ENCODE measurements at regions of chr21 and their contacts with region 1.

Region 1: DNA sequence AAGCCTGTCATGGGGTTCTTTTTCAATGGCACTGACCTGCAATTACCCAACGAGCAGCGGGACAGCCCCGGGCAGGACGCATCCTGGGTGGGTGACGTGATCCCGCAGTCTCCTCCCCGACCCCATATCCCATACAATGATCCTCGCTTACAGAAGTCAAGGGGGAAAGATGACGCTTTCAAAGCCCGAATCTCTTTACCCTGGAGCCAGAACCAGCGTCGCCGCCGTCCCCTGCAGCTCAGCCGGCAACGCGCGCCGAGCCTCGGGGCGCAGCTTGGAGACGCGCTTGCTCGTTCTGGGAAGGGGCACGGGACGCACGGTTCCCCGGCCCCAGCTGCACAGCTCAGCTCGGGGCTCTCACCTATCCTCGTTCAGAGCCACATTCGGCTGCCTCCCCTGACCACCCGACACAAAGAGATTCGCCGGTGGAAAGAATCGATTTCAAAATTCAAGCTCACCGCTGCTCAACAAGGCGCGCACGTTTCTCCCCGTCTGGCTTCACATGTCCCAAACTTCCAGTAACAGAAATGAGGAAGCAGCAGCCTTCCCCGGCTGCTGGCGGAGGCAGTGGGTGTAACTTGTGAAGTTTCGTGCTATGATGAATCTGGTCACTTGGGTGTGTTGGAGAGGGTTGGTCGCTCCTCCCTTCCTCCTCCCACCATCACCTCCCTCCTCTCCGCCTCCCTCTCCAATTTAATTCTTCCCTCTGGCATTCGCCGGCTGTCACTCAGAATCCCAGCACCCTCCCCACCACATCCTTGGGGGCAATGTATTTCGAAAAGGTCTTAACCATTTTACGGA is at the start of gene TIAM1:
- ATAC-seq: peak; percentile 57 to 93 (median 74)
- H3K4me3 ChIP-seq: peak within 1 kb of the TSS; percentile 25 to 44 (median 28)
- H3K27ac ChIP-seq: no peak within 1 kb of the TSS
- H3K4me1 ChIP-seq: peaks cover 6 to 41% of the 10 kb centered on the region in 2 donors
- total RNA-seq, gene TIAM1: 1.6 to 70.7 (median 18.7) TPM

Region 2: DNA sequence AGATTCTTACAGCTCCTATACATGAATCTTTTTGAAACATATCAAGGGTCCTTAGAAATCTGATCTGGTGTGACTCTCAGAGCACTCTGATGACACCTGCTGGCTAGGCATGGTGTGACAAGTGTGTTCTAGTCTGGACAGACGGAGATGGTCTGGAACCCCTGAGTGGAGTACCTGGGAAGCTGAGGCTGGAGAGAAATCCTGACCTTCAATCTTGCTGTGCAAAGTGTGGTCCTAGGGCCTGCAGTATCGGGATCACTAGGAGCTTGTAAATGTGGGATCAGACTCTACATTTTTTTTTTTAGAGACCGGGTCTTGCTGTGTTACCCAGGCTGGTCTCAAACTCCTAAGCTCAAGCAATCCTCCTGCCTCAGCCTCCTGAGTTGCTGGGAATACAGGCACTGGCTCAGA is 237.0 kb after region 1 on chr21:
- in situ Hi-C with region 1: loop called in 3 of 9 experiments (anchors 25 kb)
- ATAC-seq: peak; percentile 19 to 87 (median 56)
- H3K4me3 ChIP-seq: no peak overlapping the region
- H3K27ac ChIP-seq: no peak overlapping the region
- H3K4me1 ChIP-seq: peaks cover 10 to 15% of the 10 kb centered on the region in 2 donors

Region 3: GRCh38 chr21:31623664-31624063 is 279.8 kb after region 1 on chr21:
- in situ Hi-C with region 1: no loop called
- ATAC-seq: no peak
- H3K4me3 ChIP-seq: no peak overlapping the region
- H3K27ac ChIP-seq: no peak overlapping the region
- H3K4me1 ChIP-seq: no peaks in the 10 kb centered on the region

Measured in motor neuron (in vitro differentiated cells).